Activated CD4-positive, alpha-beta T cell treated with anti-CD3 and anti-CD28 coated beads for 36 hours (primary cell): ENCODE measurements at regions of chr5 and their contacts with region 1.

Region 1: GRCh38 chr5:151447174-151448037 is at the start of gene SLC36A1:
- DNase-seq: peak; percentile 98
- ATAC-seq: peak; percentile 94
- H3K4me3 Mint-ChIP-seq: peak within 1 kb of the TSS; percentile 93
- H3K27ac Mint-ChIP-seq: peak within 1 kb of the TSS; percentile 88
- H3K4me1 Mint-ChIP-seq: peaks cover 22% of the 10 kb centered on the region
- H3K27me3 Mint-ChIP-seq: peaks cover 12% of the 10 kb centered on the region
- total RNA-seq, gene SLC36A1: 3.4 to 4.4 TPM

Region 2: DNA sequence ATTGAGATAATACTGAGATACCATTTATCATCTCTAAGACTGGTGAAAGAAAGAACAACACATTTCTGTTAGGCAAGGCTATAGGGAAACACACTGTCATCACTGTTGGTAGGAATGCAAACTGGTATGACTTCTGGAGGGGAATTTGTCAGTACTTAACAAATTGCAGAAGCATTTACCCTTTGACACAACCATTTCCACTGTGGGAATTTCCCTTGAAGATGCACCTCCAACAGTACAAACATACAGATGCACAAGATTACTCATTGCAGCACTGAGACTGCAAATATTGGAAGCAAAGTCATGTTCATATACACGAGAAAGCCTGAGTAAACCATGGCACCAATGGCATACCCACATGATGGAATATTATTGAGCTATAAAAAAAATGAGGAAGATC is 176.8 kb before region 1 on chr5:
- CTCF ChIA-PET with region 1: no interaction called
- POLR2A ChIA-PET with region 1: no interaction called
- intact Hi-C with region 1: loop called in 1 of 2 experiments (anchors 5 kb)
- DNase-seq: peak; percentile 16
- ATAC-seq: peak; percentile 97
- H3K4me3 Mint-ChIP-seq: no peak overlapping the region
- H3K27ac Mint-ChIP-seq: no peak overlapping the region
- H3K4me1 Mint-ChIP-seq: no peaks in the 10 kb centered on the region
- H3K27me3 Mint-ChIP-seq: no peaks in the 10 kb centered on the region

Region 3: GRCh38 chr5:151499501-151500035 is 52.2 kb after region 1 on chr5:
- CTCF ChIA-PET with region 1: interaction called, 5 read pairs
- POLR2A ChIA-PET with region 1: no interaction called
- intact Hi-C with region 1: loop called (anchors 1 kb)
- DNase-seq: no peak
- ATAC-seq: no peak
- H3K4me3 Mint-ChIP-seq: no peak overlapping the region
- H3K27ac Mint-ChIP-seq: no peak overlapping the region
- H3K4me1 Mint-ChIP-seq: peaks cover 4% of the 10 kb centered on the region
- H3K27me3 Mint-ChIP-seq: no peaks in the 10 kb centered on the region

Region 4: DNA sequence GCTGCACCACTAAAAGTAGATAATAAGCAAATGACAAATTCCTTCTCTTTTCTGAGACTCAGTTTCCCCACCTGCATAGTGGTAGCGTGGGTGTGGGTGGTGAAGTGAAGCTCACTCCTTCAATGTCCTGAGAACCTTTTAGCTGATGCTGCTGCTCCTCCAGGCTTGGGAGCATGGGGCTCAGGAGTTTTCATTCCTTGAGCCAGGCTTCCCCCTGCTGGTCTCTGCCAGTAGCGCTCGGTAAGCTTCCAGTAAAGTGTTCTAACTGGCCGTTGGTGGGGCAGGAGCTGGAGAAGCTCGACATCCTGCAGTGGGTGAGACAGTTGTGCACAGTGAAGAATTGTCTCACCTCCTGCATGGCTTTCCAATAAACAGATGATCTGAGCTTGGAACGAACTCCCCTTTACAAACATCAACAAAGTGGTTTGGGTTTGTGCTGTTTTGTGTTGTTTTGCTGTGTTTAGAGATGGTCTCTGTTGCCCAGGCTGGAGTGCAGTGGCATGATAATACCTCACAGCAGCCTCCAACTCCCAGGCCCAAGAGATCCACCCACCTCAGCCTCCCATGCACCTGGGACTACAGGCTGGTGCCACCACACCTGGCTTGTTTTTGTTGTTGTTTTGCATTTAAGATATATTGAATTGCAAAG is 204.7 kb after region 1 on chr5:
- CTCF ChIA-PET with region 1: interaction called, 42 read pairs
- POLR2A ChIA-PET with region 1: interaction called, 9 read pairs
- intact Hi-C with region 1: loop called (anchors 1 kb)
- DNase-seq: peak; percentile 85
- ATAC-seq: peak; percentile 96
- H3K4me3 Mint-ChIP-seq: no peak overlapping the region
- H3K27ac Mint-ChIP-seq: no peak overlapping the region
- H3K4me1 Mint-ChIP-seq: peaks cover 4% of the 10 kb centered on the region
- H3K27me3 Mint-ChIP-seq: no peaks in the 10 kb centered on the region

Region 5: GRCh38 chr5:151758430-151759241 is 311.2 kb after region 1 on chr5 and contains the start of gene ATOX1:
- CTCF ChIA-PET with region 1: no interaction called
- POLR2A ChIA-PET with region 1: no interaction called
- intact Hi-C with region 1: loop called (anchors 1 to 5 kb)
- DNase-seq: peak; percentile 95
- ATAC-seq: peak; percentile 99
- H3K4me3 Mint-ChIP-seq: peak within 1 kb of the TSS; percentile 98
- H3K27ac Mint-ChIP-seq: peak within 1 kb of the TSS; percentile 98
- H3K4me1 Mint-ChIP-seq: peaks cover 33% of the 10 kb centered on the region
- H3K27me3 Mint-ChIP-seq: no peaks in the 10 kb centered on the region
- total RNA-seq, gene ATOX1: 74.8 to 85.9 TPM